ENCODE measurements at regions of chr6 and their contacts with region 1.

Region 1: DNA sequence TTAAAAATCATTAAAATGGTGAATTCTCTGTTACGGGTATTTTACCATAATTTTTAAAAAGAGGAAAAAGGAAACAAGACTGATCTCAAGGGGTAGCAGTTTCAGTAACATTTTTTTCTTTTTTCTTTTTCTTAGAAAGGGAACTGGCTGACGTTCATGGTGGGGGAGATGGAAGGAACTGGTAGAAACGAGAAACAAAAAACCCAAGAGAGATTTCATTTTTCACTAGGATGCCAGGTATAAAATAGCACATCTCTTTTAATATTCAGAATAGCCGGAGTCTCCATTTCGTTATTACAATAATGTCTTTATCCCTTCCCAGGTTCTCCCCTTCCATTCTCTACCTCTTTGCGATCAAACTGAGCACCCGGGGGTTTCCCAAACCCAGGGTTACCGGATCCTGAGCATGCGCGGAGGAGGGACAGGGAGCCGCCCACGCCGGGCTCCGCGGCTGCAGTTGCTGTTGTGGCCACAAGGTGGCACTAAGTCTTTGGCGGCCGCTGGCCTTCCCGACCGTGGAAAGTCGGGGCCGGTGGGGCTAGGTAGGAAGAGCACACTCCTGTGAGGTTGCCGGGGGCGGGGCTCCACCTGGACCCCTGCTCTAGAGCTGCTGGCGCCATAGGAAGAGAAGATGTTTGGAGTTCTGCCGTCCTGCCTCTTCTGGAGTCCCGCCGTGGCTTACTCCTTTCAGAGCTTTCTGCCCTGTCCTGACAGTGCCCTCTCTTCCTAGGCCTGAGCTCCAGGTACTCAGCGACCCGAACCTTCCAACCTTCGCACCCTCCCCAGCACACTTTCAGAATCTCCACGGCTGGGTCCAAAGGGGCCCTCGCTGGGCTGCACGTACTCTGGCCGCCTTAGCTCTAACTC is 146.8 kb downstream of the SH3BGRL2 start:
- DNase-seq: peak; percentile 43
- ATAC-seq: peak; percentile 94
- H3K4me3 ChIP-seq: peak overlapping the region; percentile 26 to 50
- H3K27ac ChIP-seq: no peak overlapping the region
- H3K4me1 ChIP-seq: peaks cover 0 to 11% of the 10 kb centered on the region in 2 experiments; a peak in 1 of 4 replicates
- H3K27me3 ChIP-seq: no peaks in the 10 kb centered on the region
- CTCF ChIP-seq: peak; percentile 74 to 98 (median 95)
- POLR2A ChIP-seq: no peak
- RAD21 ChIP-seq: peak; percentile 83

Region 2: GRCh38 chr6:79813854-79814709 is 36.1 kb after region 1 on chr6:
- CTCF ChIA-PET with region 1: interaction called, 6 read pairs
- POLR2A ChIA-PET with region 1: no interaction called
- RAD21 ChIA-PET with region 1: no interaction called
- intact Hi-C with region 1: loop called (anchors 1 kb)
- DNase-seq: peak; percentile 62
- ATAC-seq: peak; percentile 93
- H3K4me3 ChIP-seq: no peak overlapping the region
- H3K27ac ChIP-seq: no peak overlapping the region
- H3K4me1 ChIP-seq: peaks cover 0 to 5% of the 10 kb centered on the region in 2 experiments; a peak in 1 of 4 replicates
- H3K27me3 ChIP-seq: no peaks in the 10 kb centered on the region
- CTCF ChIP-seq: peak; percentile 75 to 88 (median 85); a peak in 5 of 6 replicates
- POLR2A ChIP-seq: no peak
- RAD21 ChIP-seq: peak; percentile 76

Region 3: GRCh38 chr6:80094017-80094416 is 316.1 kb after region 1 on chr6:
- CTCF ChIA-PET with region 1: no interaction called
- POLR2A ChIA-PET with region 1: no interaction called
- RAD21 ChIA-PET with region 1: no interaction called
- intact Hi-C with region 1: loop called (anchors 5 kb)
- DNase-seq: peak; percentile 6
- ATAC-seq: 0 out of 2 replicates have a peak, but pooled peaks have one; percentile 44
- H3K4me3 ChIP-seq: no peak overlapping the region
- H3K27ac ChIP-seq: no peak overlapping the region
- H3K4me1 ChIP-seq: no peaks in the 10 kb centered on the region
- H3K27me3 ChIP-seq: no peaks in the 10 kb centered on the region
- CTCF ChIP-seq: peak; percentile 22 to 71 (median 59); a peak in 5 of 6 replicates
- POLR2A ChIP-seq: no peak
- RAD21 ChIP-seq: peak; percentile 75